Ascending aorta (tissue), 2 donors: ENCODE measurements at regions of chr15 and their contacts with region 1.

Region 1: DNA sequence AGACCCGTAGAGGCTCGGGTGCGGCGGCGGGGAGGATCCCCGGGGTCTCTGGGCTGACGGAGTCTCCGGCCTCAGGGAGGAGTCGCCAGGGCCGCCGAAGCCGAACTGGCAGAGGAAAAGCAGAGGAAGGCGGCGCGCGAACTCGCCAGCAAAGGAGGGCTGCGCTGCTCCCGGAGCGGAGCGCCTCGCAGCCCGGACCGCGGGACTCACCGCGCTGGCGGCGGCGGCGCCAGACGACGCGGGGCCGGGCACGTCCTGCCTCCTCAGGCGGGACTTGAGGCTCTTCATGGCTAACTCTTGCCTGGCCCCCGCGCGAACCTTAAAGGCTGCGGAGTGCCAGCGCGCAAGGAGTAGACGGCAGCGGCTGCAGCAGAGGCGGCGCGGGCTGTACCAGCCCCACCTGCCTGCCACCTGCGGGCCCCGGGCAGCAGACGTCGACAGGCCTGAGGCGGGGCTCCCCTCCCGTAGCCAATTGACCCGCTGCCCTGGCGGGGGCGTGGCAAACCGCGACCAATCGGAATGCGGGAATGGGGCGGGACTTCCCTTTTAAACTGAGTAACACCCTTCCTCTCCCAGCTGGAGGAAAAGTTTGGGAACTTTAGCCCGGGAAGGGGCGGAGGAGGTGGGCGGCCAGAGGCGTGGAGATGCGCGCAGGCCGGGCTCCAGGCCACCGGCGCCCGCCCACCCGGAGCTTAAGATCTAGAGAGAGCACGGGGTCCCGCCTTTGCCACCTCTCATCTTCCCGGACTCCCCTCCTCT is at the start of gene UACA:
- DNase-seq: peak; percentile 88 to 98
- H3K4me3 ChIP-seq: peak within 1 kb of the TSS; percentile 87 to 99
- H3K27ac ChIP-seq: peak within 1 kb of the TSS; percentile 99
- H3K4me1 ChIP-seq: peaks cover 6 to 23% of the 10 kb centered on the region in 2 donors
- H3K27me3 ChIP-seq: no peaks in the 10 kb centered on the region
- CTCF ChIP-seq: no peak
- total RNA-seq, gene UACA: 34.0 TPM

Region 2: GRCh38 chr15:70643783-70644125 is 119.5 kb before region 1 on chr15:
- intact Hi-C with region 1: no loop called
- DNase-seq: no peak
- H3K4me3 ChIP-seq: no peak overlapping the region
- H3K27ac ChIP-seq: no peak overlapping the region
- H3K4me1 ChIP-seq: peaks cover 0 to 5% of the 10 kb centered on the region in 2 donors
- H3K27me3 ChIP-seq: no peaks in the 10 kb centered on the region
- CTCF ChIP-seq: no peak

Region 3: GRCh38 chr15:70701891-70702568 is 61.3 kb before region 1 on chr15:
- intact Hi-C with region 1: loop called (anchors 5 kb)
- DNase-seq: no peak
- H3K4me3 ChIP-seq: peak overlapping the region; percentile 42 to 57
- H3K27ac ChIP-seq: peak overlapping the region; percentile 73 to 80
- H3K4me1 ChIP-seq: peaks cover 3 to 48% of the 10 kb centered on the region in 2 donors
- H3K27me3 ChIP-seq: no peaks in the 10 kb centered on the region
- CTCF ChIP-seq: no peak

Region 4: GRCh38 chr15:70799667-70800450 is 36.6 kb after region 1 on chr15:
- intact Hi-C with region 1: loop called (anchors 5 kb)
- DNase-seq: peak in 1 of 2 donors; percentile 76
- H3K4me3 ChIP-seq: peak overlapping the region in 1 of 2 donors; percentile 21
- H3K27ac ChIP-seq: peak overlapping the region; percentile 74
- H3K4me1 ChIP-seq: peaks cover 6 to 24% of the 10 kb centered on the region in 2 donors
- H3K27me3 ChIP-seq: no peaks in the 10 kb centered on the region
- CTCF ChIP-seq: no peak

Region 5: GRCh38 chr15:70810916-70811578 is 47.7 kb after region 1 on chr15:
- intact Hi-C with region 1: loop called (anchors 2 kb)
- DNase-seq: no peak
- H3K4me3 ChIP-seq: no peak overlapping the region
- H3K27ac ChIP-seq: no peak overlapping the region
- H3K4me1 ChIP-seq: peaks cover 0 to 9% of the 10 kb centered on the region in 2 donors
- H3K27me3 ChIP-seq: no peaks in the 10 kb centered on the region
- CTCF ChIP-seq: no peak